IMR-90 (cell line): ENCODE measurements at regions of chr13 and their contacts with region 1.

Region 1: GRCh38 chr13:67366533-67366932 is 136.4 kb upstream of the PCDH9 start:
- DNase-seq: peak; percentile 50
- ATAC-seq: no peak
- H3K4me3 ChIP-seq: no peak overlapping the region
- H3K27ac ChIP-seq: no peak overlapping the region
- H3K4me1 ChIP-seq: peaks cover 2% of the 10 kb centered on the region; the same call in 1 of the 2 replicates
- H3K27me3 ChIP-seq: no peaks in the 10 kb centered on the region
- CTCF ChIP-seq: peak; percentile 31
- POLR2A ChIP-seq: no peak
- RAD21 ChIP-seq: peak; percentile 19; the same call in 1 of the 2 replicates

Region 2: DNA sequence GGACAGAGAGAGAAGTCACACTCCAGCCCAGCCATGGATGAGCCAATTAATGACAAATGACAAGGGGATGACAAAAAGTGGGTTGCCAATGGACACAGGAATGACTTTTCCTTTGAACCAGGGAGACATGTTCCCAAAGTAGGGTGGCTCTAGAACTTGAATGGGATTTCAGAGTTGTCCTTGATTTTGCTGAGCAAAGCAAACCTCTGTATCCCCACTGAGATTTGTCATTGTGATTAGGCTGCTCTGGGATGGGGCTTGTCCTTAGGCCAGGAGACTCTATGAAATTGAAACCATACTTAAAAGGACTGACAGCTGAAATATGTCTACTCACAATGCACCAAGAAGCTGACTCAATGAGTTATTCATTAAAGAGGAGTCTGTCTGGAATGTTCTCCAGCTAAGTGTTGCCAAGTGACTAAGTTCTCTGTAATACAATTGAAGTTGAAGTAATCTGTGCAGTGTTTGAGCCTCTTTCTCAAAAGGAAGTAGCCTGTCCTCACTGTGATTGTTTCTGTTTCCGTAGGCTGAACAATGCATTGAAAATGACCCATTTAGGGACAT is 67.4 kb before region 1 on chr13:
- CTCF ChIA-PET with region 1: no interaction called
- POLR2A ChIA-PET with region 1: no interaction called
- dilution Hi-C with region 1: no loop called
- in situ Hi-C with region 1: no loop called
- intact Hi-C with region 1: loop called (anchors 5 kb)
- DNase-seq: peak; percentile 91
- ATAC-seq: peak; percentile 83
- H3K4me3 ChIP-seq: peak overlapping the region; percentile 11; the same call in 1 of the 2 replicates
- H3K27ac ChIP-seq: peak overlapping the region; percentile 63
- H3K4me1 ChIP-seq: peaks cover 4% of the 10 kb centered on the region; the same call in 1 of the 2 replicates
- H3K27me3 ChIP-seq: no peaks in the 10 kb centered on the region
- CTCF ChIP-seq: no peak
- POLR2A ChIP-seq: no peak
- RAD21 ChIP-seq: no peak

Region 3: GRCh38 chr13:67328895-67329294 is 37.6 kb before region 1 on chr13:
- CTCF ChIA-PET with region 1: interaction called, 3 read pairs
- POLR2A ChIA-PET with region 1: no interaction called
- dilution Hi-C with region 1: no loop called
- in situ Hi-C with region 1: no loop called
- intact Hi-C with region 1: loop called (anchors 1 kb)
- DNase-seq: no peak
- ATAC-seq: no peak
- H3K4me3 ChIP-seq: no peak overlapping the region
- H3K27ac ChIP-seq: no peak overlapping the region
- H3K4me1 ChIP-seq: no peaks in the 10 kb centered on the region
- H3K27me3 ChIP-seq: no peaks in the 10 kb centered on the region
- CTCF ChIP-seq: no peak
- POLR2A ChIP-seq: no peak
- RAD21 ChIP-seq: no peak

Region 4: GRCh38 chr13:67408798-67409197 is 42.3 kb after region 1 on chr13:
- CTCF ChIA-PET with region 1: no interaction called
- POLR2A ChIA-PET with region 1: no interaction called
- dilution Hi-C with region 1: no loop called
- in situ Hi-C with region 1: no loop called
- intact Hi-C with region 1: no loop called
- DNase-seq: no peak
- ATAC-seq: no peak
- H3K4me3 ChIP-seq: no peak overlapping the region
- H3K27ac ChIP-seq: no peak overlapping the region
- H3K4me1 ChIP-seq: no peaks in the 10 kb centered on the region
- H3K27me3 ChIP-seq: no peaks in the 10 kb centered on the region
- CTCF ChIP-seq: no peak
- POLR2A ChIP-seq: no peak
- RAD21 ChIP-seq: no peak